WTC11 (cell line): ENCODE measurements at regions of chr17 and their contacts with region 1.

Region 1: DNA sequence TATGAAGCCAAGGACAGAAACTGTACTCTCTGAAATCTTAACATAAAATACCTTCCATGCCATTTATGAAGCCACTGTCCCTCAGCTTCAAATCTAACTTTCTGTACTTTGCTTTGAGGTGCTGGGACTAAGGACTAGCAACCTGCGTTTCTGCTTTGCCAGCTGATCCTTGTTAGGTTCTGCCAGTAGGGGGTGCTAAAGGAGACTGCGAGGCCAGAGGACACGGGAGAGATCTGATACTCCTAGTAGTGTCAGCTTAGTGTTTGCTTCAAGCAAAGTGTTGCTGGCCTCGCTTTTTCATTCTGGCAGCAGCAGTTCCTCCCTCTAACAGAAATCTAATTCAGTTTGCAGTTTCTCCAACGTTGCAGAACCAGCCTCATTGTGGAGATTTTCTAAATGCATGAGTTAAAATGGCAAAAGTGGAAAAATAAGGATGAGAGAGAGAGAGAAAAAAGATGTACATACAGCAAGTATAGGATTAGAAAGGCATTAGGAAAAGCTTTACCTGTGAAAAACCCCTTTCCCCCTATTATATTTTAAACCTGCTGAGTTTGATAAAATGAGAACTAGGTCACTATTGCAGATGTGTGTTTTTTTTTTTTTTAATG is 297.5 kb downstream of the CA10 start:
- DNase-seq: peak; percentile 60
- ATAC-seq: peak; percentile 65
- H3K4me3 Mint-ChIP-seq: no peak overlapping the region
- H3K27ac Mint-ChIP-seq: no peak overlapping the region
- H3K4me1 Mint-ChIP-seq: no peaks in the 10 kb centered on the region
- H3K27me3 Mint-ChIP-seq: no peaks in the 10 kb centered on the region; the same call in 1 of the 2 replicates
- CTCF ChIP-seq: peak; percentile 42

Region 2: DNA sequence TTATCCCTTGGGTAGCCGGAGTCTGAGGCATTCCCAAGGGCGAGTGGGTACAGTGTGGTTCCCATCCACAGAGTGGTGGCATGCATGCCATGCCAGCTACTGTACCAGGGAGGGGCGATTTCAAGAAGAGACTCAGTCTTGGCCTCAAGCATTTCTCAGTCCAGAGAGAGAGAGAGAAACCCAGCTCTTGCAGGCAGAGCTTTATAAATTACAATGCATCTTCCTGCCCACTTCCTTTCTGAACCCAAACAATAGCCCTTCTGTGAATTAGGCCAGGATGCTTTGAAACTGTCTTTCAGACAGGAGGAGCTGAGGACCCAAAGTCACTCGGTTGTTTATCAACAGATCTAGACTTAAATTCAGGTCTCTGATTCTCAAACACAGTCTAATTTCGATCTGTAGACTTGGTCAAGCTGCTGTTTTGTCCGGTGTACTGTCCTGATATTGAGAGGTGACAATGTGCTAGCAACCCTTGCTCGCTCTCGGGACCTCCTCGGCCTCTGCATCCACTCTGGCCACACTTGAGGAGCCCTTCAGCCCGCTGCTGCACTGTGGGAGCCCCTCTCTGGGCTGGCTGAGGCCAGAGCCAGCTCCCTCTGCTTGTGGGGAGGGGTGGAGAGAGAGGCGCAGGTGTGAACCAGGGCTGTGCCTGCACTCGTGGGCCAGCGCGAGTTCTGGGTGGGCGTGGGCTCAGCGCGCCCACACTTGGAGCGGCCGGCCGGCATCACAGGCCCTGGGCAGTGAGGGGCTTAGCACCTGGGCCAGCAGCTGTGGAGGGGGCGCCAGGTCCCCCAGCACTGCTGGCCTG is 192.7 kb before region 1 on chr17:
- CTCF ChIA-PET with region 1: no interaction called
- POLR2A ChIA-PET with region 1: no interaction called
- DNase-seq: no peak
- ATAC-seq: no peak
- H3K4me3 Mint-ChIP-seq: no peak overlapping the region
- H3K27ac Mint-ChIP-seq: no peak overlapping the region
- H3K4me1 Mint-ChIP-seq: no peaks in the 10 kb centered on the region
- H3K27me3 Mint-ChIP-seq: peaks cover 12% of the 10 kb centered on the region
- CTCF ChIP-seq: no peak

Region 3: DNA sequence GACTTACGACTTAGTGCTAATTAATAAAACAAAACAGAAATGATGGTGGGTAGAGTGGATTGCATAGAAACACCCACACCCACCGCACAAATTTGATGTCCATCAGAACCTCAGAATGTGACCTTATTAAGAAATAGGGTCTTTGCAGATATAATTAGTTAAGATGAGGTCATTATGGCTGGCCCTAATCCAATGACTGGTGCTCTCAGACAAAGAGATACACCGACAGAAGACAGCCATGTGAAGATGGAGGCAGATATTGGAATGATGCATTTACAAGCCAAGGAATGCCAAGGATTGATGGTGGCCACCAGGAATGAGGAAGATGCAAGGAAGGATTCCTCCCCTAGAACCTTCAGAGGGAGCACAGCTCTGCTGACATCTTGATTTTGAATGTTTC is 16.3 kb before region 1 on chr17:
- CTCF ChIA-PET with region 1: no interaction called
- POLR2A ChIA-PET with region 1: no interaction called
- DNase-seq: no peak
- ATAC-seq: no peak
- H3K4me3 Mint-ChIP-seq: no peak overlapping the region
- H3K27ac Mint-ChIP-seq: no peak overlapping the region
- H3K4me1 Mint-ChIP-seq: no peaks in the 10 kb centered on the region
- H3K27me3 Mint-ChIP-seq: no peaks in the 10 kb centered on the region
- CTCF ChIP-seq: no peak

Region 4: DNA sequence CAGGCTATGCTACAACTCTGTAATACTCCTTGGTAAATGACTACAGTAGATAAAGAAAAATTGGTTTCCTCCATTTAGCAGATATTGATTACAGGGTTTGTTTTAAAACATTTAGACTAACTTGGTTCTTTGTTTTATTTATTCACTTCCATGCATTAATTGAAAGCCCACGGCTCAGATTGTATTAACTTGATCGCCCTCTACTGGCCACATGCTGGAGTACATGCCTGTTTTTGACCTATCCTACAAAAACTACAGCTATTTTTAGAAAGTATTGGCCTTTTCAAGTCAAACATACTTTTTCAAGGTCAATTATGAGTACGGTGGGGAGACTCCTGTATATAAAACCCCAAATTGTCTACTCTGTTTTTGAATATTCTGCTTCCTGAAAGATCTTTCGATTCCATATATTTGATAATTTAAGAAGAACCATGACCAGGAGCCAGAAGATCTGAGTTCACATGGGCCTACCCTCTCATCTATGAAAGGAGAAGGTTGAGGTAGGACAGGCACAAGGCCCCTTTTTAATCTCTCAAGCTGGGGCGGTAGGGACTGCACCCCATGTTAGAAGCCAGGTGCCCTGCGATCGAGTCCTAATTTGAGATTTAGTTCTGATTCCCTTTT is 245.7 kb after region 1 on chr17:
- CTCF ChIA-PET with region 1: interaction called, 16 read pairs
- POLR2A ChIA-PET with region 1: no interaction called
- DNase-seq: peak; percentile 42
- ATAC-seq: peak; percentile 41; the same call in 1 of the 2 replicates
- H3K4me3 Mint-ChIP-seq: no peak overlapping the region
- H3K27ac Mint-ChIP-seq: no peak overlapping the region
- H3K4me1 Mint-ChIP-seq: peaks cover 7% of the 10 kb centered on the region
- H3K27me3 Mint-ChIP-seq: peaks cover 7% of the 10 kb centered on the region; the same call in 1 of the 2 replicates
- CTCF ChIP-seq: peak; percentile 58; the same call in 1 of the 2 replicates